Astrocyte of the cerebellum (primary cell): ENCODE measurements at regions of chr4 and their contacts with region 1.

Region 1: GRCh38 chr4:122689972-122690371 is 42.5 kb upstream of the BBS12 start:
- DNase-seq: no peak
- H3K4me3 ChIP-seq: no peak overlapping the region
- CTCF ChIP-seq: no peak

Region 2: DNA sequence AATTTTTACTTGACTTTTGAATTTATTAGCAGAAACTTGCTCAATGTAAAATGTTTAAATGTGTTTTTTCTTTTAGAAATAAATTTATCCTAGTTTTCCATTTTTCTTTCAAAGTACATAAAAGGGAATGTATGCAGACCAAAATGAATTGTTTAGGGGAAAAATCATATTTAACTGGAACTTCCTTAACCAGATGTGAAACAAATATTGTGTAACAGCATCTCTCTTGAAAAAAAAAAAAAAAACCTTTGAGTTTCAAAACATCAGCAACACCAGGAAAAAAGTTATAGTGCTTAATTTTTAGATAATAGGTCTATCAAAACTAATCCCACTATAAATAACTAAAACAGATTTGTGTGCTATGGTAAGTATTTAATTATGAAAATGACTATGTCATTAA is 851.8 kb before region 1 on chr4:
- in situ Hi-C with region 1: no loop called
- DNase-seq: no peak
- H3K4me3 ChIP-seq: no peak overlapping the region
- CTCF ChIP-seq: no peak

Region 3: GRCh38 chr4:122602277-122603142 is 87.5 kb before region 1 on chr4:
- in situ Hi-C with region 1: loop called (anchors 5 kb)
- DNase-seq: peak; percentile 29
- H3K4me3 ChIP-seq: no peak overlapping the region
- CTCF ChIP-seq: peak; percentile 51

Region 4: GRCh38 chr4:122764821-122765215 is 74.8 kb after region 1 on chr4:
- in situ Hi-C with region 1: loop called (anchors 5 kb)
- DNase-seq: no peak
- H3K4me3 ChIP-seq: no peak overlapping the region
- CTCF ChIP-seq: no peak